ENCODE measurements at regions of chr17 and their contacts with region 1.

Region 1: GRCh38 chr17:72421128-72422092 is 300.6 kb downstream of the SOX9 start:
- DNase-seq: peak; percentile 94
- ATAC-seq: peak; percentile 44
- H3K4me3 ChIP-seq: peak overlapping the region; percentile 42; the same call in 1 of the 2 replicates
- H3K27ac ChIP-seq: peak overlapping the region; percentile 95
- H3K4me1 ChIP-seq: peaks cover 64% of the 10 kb centered on the region
- H3K27me3 ChIP-seq: no peaks in the 10 kb centered on the region
- CTCF ChIP-seq: no peak
- EP300 ChIP-seq: peak; percentile 97
- POLR2A ChIP-seq: peak; percentile 61
- RAD21 ChIP-seq: peak; percentile 12; the same call in 1 of the 2 replicates

Region 2: GRCh38 chr17:72004611-72005331 is 416.6 kb before region 1 on chr17:
- CTCF ChIA-PET with region 1: no interaction called
- POLR2A ChIA-PET with region 1: interaction called, 6 read pairs
- RAD21 ChIA-PET with region 1: interaction called, 5 read pairs
- SMC1A ChIA-PET with region 1: no interaction called
- in situ Hi-C with region 1: no loop called
- intact Hi-C with region 1: loop called (anchors 1 kb)
- DNase-seq: peak; percentile 79
- ATAC-seq: peak; percentile 77
- H3K4me3 ChIP-seq: peak overlapping the region; percentile 35
- H3K27ac ChIP-seq: peak overlapping the region; percentile 87
- H3K4me1 ChIP-seq: peaks cover 7% of the 10 kb centered on the region; the same call in 1 of the 2 replicates
- H3K27me3 ChIP-seq: no peaks in the 10 kb centered on the region
- CTCF ChIP-seq: no peak
- EP300 ChIP-seq: peak in 1 of 2 experiments; percentile 11; a peak in 2 of 4 replicates
- POLR2A ChIP-seq: no peak
- RAD21 ChIP-seq: peak; percentile 10; the same call in 1 of the 2 replicates

Region 3: DNA sequence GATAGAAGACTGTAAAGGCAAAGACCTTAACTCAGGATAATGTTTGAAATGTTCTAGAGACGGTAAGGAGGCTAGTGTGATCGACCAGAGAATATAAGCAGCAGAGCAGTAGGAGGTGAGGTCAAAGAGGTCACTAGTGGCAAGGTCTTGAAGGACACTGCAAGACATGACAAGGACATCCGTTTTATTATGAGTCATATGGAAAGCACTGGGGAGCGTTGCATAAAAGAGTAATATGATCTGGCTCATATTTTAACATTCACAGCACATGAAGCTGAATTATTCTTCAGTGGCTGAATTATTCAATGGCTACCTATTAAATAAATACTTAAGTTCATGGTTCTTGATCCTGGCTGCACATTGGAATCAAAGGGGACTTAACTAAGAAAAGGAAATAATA is 176.9 kb before region 1 on chr17:
- CTCF ChIA-PET with region 1: no interaction called
- POLR2A ChIA-PET with region 1: no interaction called
- RAD21 ChIA-PET with region 1: no interaction called
- SMC1A ChIA-PET with region 1: no interaction called
- in situ Hi-C with region 1: no loop called
- intact Hi-C with region 1: no loop called
- DNase-seq: no peak
- ATAC-seq: no peak
- H3K4me3 ChIP-seq: no peak overlapping the region
- H3K27ac ChIP-seq: no peak overlapping the region
- H3K4me1 ChIP-seq: no peaks in the 10 kb centered on the region
- H3K27me3 ChIP-seq: no peaks in the 10 kb centered on the region
- CTCF ChIP-seq: no peak
- EP300 ChIP-seq: no peak
- POLR2A ChIP-seq: no peak
- RAD21 ChIP-seq: no peak

Region 4: GRCh38 chr17:72255481-72255880 is 165.9 kb before region 1 on chr17:
- CTCF ChIA-PET with region 1: no interaction called
- POLR2A ChIA-PET with region 1: no interaction called
- RAD21 ChIA-PET with region 1: no interaction called
- SMC1A ChIA-PET with region 1: no interaction called
- in situ Hi-C with region 1: no loop called
- intact Hi-C with region 1: no loop called
- DNase-seq: no peak
- ATAC-seq: no peak
- H3K4me3 ChIP-seq: no peak overlapping the region
- H3K27ac ChIP-seq: no peak overlapping the region
- H3K4me1 ChIP-seq: no peaks in the 10 kb centered on the region
- H3K27me3 ChIP-seq: no peaks in the 10 kb centered on the region; a peak in 1 of 4 replicates
- CTCF ChIP-seq: no peak
- EP300 ChIP-seq: no peak
- POLR2A ChIP-seq: no peak
- RAD21 ChIP-seq: no peak

Region 5: DNA sequence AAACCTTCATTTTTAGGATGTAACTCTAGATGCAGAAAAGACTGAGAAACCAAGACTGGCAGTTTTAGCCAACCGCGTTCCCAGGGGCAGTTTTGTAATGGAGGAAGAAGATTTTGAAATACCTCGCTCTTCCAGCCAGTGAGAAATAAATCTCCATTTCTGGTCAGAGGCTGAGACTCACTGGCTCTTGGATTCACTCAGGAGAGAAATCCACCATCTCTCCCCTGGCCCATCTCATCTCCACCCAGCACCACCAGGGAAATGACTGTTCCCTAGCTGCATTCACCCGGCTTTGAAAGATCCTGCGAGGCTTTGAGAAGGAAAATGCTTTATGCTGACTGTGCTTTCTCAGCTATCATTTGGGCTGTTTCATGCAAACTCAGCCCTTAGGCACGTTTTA is 115.4 kb before region 1 on chr17:
- CTCF ChIA-PET with region 1: no interaction called
- POLR2A ChIA-PET with region 1: interaction called, 3 read pairs
- RAD21 ChIA-PET with region 1: interaction called, 3 read pairs
- SMC1A ChIA-PET with region 1: no interaction called
- in situ Hi-C with region 1: loop called (anchors 5 kb)
- intact Hi-C with region 1: no loop called
- DNase-seq: no peak
- ATAC-seq: no peak
- H3K4me3 ChIP-seq: no peak overlapping the region
- H3K27ac ChIP-seq: no peak overlapping the region
- H3K4me1 ChIP-seq: peaks cover 15% of the 10 kb centered on the region
- H3K27me3 ChIP-seq: no peaks in the 10 kb centered on the region
- CTCF ChIP-seq: no peak
- EP300 ChIP-seq: no peak
- POLR2A ChIP-seq: no peak
- RAD21 ChIP-seq: no peak

Region 6: DNA sequence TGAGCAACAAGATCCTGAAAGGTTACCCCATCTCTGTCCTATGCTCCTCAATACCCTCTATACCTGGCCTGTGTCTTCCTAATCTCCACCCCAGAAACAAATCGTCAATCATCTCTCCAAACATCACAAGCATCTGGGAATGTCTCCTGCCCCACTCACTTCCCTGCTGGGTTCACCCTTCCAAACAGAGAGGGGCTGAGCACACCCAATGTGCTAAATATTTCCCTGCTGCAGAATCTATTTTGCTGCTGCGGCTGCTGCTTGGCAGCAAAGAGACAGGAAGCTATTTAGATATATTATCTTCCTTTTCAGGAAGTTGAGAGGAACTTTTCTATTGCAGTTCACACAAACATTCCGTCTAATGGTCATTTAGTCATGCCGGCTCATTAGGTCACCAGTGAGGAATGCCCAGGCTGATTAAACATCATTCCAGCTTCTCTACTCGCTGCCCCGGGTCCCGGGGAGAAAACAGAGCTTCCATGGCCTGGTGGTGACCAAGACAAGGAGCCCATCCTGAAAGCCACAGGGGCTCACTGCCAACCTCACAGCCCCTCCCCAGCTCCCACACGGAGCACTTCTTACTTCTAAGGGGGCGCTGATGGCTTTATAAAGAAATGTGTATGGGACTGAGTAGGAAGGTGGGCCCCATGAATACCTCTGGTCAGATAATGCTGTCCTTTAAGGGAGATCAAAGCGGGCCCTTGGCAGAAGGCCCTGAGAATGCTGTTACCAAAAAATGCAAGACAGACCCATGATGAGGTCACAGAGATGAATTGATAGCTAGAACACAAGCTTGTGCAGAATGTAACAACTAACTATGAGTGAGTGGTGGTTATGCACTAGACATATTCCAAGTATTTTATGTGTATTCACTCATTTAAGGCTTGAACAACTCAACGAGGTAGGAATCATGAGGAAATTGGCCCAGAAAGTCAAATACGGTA is 82.3 kb before region 1 on chr17:
- CTCF ChIA-PET with region 1: no interaction called
- POLR2A ChIA-PET with region 1: no interaction called
- RAD21 ChIA-PET with region 1: no interaction called
- SMC1A ChIA-PET with region 1: no interaction called
- in situ Hi-C with region 1: no loop called
- intact Hi-C with region 1: no loop called
- DNase-seq: no peak
- ATAC-seq: no peak
- H3K4me3 ChIP-seq: no peak overlapping the region
- H3K27ac ChIP-seq: no peak overlapping the region
- H3K4me1 ChIP-seq: no peaks in the 10 kb centered on the region; the same call in 1 of the 2 replicates
- H3K27me3 ChIP-seq: no peaks in the 10 kb centered on the region
- CTCF ChIP-seq: no peak
- EP300 ChIP-seq: no peak
- POLR2A ChIP-seq: no peak
- RAD21 ChIP-seq: no peak

Region 7: GRCh38 chr17:72388765-72389473 is 32.5 kb before region 1 on chr17:
- CTCF ChIA-PET with region 1: interaction called, 8 read pairs
- POLR2A ChIA-PET with region 1: interaction called, 16 read pairs
- RAD21 ChIA-PET with region 1: interaction called, 110 read pairs
- SMC1A ChIA-PET with region 1: interaction called, 62 read pairs
- in situ Hi-C with region 1: no loop called
- intact Hi-C with region 1: loop called (anchors 1 kb)
- DNase-seq: peak; percentile 93
- ATAC-seq: peak; percentile 77
- H3K4me3 ChIP-seq: no peak overlapping the region
- H3K27ac ChIP-seq: 0 out of 2 replicates have a peak overlapping the region, but pooled peaks have one; percentile 14
- H3K4me1 ChIP-seq: peaks cover 40% of the 10 kb centered on the region
- H3K27me3 ChIP-seq: no peaks in the 10 kb centered on the region
- CTCF ChIP-seq: peak; percentile 41 to 64 (median 47); a peak in 5 of 6 replicates
- EP300 ChIP-seq: peak in 1 of 2 experiments; percentile 62; a peak in 1 of 4 replicates
- POLR2A ChIP-seq: no peak
- RAD21 ChIP-seq: peak; percentile 55; the same call in 1 of the 2 replicates

Region 8: GRCh38 chr17:72510397-72511016 is 89.1 kb after region 1 on chr17:
- CTCF ChIA-PET with region 1: interaction called, 53 read pairs
- POLR2A ChIA-PET with region 1: interaction called, 111 read pairs
- RAD21 ChIA-PET with region 1: interaction called, 361 read pairs
- SMC1A ChIA-PET with region 1: interaction called, 291 read pairs
- in situ Hi-C with region 1: loop called (anchors 5 kb)
- intact Hi-C with region 1: loop called (anchors 1 kb)
- DNase-seq: peak; percentile 92
- ATAC-seq: peak; percentile 80
- H3K4me3 ChIP-seq: no peak overlapping the region
- H3K27ac ChIP-seq: no peak overlapping the region
- H3K4me1 ChIP-seq: peaks cover 15% of the 10 kb centered on the region
- H3K27me3 ChIP-seq: no peaks in the 10 kb centered on the region
- CTCF ChIP-seq: no peak
- EP300 ChIP-seq: peak in 1 of 2 experiments; percentile 69; a peak in 1 of 4 replicates
- POLR2A ChIP-seq: no peak
- RAD21 ChIP-seq: no peak

Region 9: DNA sequence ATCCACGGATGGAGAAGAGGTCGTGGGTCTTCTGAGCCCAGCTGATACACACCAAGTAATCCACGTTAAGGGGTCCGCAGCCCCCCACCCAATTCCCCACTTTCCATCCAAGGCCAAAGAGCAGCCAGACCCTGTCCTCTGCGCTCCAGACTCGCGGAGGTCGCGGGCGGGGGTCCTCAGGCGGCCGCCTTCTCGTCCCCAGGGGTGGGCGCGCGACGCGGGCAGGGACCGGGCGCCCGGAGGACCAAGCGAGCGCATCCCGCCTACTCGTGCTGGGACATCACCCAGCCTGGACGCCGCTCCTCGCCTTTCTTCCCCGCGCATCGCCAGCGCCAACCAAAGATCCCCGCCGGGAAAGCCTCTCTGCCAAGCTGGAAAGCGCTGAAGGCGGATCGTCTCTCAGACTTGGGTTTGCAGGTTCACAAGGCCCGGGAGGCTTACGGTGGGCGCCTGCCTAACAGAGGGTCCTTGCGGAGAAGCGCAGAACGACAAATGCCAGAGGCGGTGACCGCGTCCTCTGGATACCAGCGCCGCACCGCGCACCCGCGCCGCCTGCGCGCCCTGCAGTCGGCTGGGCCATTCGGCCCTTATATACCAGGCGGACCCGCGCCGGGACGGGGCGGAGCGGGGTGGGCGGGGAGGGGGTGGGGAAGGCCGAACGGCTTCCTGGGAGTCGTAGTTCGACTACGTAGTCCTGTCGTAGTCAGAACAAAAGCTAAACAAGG is 171.0 kb after region 1 on chr17:
- CTCF ChIA-PET with region 1: no interaction called
- POLR2A ChIA-PET with region 1: no interaction called
- RAD21 ChIA-PET with region 1: no interaction called
- SMC1A ChIA-PET with region 1: no interaction called
- in situ Hi-C with region 1: no loop called
- intact Hi-C with region 1: no loop called
- DNase-seq: no peak
- ATAC-seq: peak; percentile 82
- H3K4me3 ChIP-seq: peak overlapping the region; percentile 59
- H3K27ac ChIP-seq: no peak overlapping the region
- H3K4me1 ChIP-seq: 0 out of 2 replicates have a peak, but pooled peaks cover 3% of the 10 kb centered on the region
- H3K27me3 ChIP-seq: no peaks in the 10 kb centered on the region; a peak in 2 of 4 replicates
- CTCF ChIP-seq: no peak
- EP300 ChIP-seq: no peak
- POLR2A ChIP-seq: peak; percentile 90
- RAD21 ChIP-seq: no peak

Region 10: GRCh38 chr17:72602517-72603419 is 181.4 kb after region 1 on chr17:
- CTCF ChIA-PET with region 1: no interaction called
- POLR2A ChIA-PET with region 1: interaction called, 5 read pairs
- RAD21 ChIA-PET with region 1: interaction called, 5 read pairs
- SMC1A ChIA-PET with region 1: no interaction called
- in situ Hi-C with region 1: no loop called
- intact Hi-C with region 1: loop called (anchors 5 kb)
- DNase-seq: no peak
- ATAC-seq: peak; percentile 62
- H3K4me3 ChIP-seq: no peak overlapping the region
- H3K27ac ChIP-seq: peak overlapping the region; percentile 31
- H3K4me1 ChIP-seq: peaks cover 6% of the 10 kb centered on the region
- H3K27me3 ChIP-seq: no peaks in the 10 kb centered on the region
- CTCF ChIP-seq: 0 out of 6 replicates have a peak, but pooled peaks of 2 of the 3 experiments have one; percentile 4 to 17
- EP300 ChIP-seq: no peak
- POLR2A ChIP-seq: no peak
- RAD21 ChIP-seq: no peak